Ascending aorta (tissue), 2 donors: ENCODE measurements at regions of chr1 and their contacts with region 1.

Region 1: GRCh38 chr1:112674439-112674985 is at the start of gene MOV10:
- DNase-seq: peak in 1 of 2 donors; percentile 84
- H3K4me3 ChIP-seq: peak within 1 kb of the TSS; percentile 90 to 99
- H3K27ac ChIP-seq: peak within 1 kb of the TSS; percentile 85 to 89
- H3K4me1 ChIP-seq: peaks cover 0 to 17% of the 10 kb centered on the region in 2 donors
- H3K27me3 ChIP-seq: no peaks in the 10 kb centered on the region
- CTCF ChIP-seq: no peak
- total RNA-seq, gene MOV10: 69.5 TPM

Region 2: GRCh38 chr1:112501810-112502641 is 172.5 kb before region 1 on chr1:
- intact Hi-C with region 1: loop called (anchors 10 kb)
- DNase-seq: peak in 1 of 2 donors; percentile 81
- H3K4me3 ChIP-seq: peak overlapping the region; percentile 63 to 74
- H3K27ac ChIP-seq: peak overlapping the region in 1 of 2 donors; percentile 29
- H3K4me1 ChIP-seq: no peaks in the 10 kb centered on the region
- H3K27me3 ChIP-seq: no peaks in the 10 kb centered on the region
- CTCF ChIP-seq: peak; percentile 67 to 87 (median 71)

Region 3: GRCh38 chr1:112700290-112701226 is 26.0 kb after region 1 on chr1:
- intact Hi-C with region 1: loop called (anchors 1 kb)
- DNase-seq: peak; percentile 93 to 99
- H3K4me3 ChIP-seq: peak overlapping the region in 1 of 2 donors; percentile 11
- H3K27ac ChIP-seq: peak overlapping the region; percentile 99
- H3K4me1 ChIP-seq: peaks cover 27 to 45% of the 10 kb centered on the region in 2 donors
- H3K27me3 ChIP-seq: no peaks in the 10 kb centered on the region
- CTCF ChIP-seq: no peak